Psoas muscle (tissue), 8 donors: ENCODE measurements at regions of chr6 and their contacts with region 1.

Region 1: DNA sequence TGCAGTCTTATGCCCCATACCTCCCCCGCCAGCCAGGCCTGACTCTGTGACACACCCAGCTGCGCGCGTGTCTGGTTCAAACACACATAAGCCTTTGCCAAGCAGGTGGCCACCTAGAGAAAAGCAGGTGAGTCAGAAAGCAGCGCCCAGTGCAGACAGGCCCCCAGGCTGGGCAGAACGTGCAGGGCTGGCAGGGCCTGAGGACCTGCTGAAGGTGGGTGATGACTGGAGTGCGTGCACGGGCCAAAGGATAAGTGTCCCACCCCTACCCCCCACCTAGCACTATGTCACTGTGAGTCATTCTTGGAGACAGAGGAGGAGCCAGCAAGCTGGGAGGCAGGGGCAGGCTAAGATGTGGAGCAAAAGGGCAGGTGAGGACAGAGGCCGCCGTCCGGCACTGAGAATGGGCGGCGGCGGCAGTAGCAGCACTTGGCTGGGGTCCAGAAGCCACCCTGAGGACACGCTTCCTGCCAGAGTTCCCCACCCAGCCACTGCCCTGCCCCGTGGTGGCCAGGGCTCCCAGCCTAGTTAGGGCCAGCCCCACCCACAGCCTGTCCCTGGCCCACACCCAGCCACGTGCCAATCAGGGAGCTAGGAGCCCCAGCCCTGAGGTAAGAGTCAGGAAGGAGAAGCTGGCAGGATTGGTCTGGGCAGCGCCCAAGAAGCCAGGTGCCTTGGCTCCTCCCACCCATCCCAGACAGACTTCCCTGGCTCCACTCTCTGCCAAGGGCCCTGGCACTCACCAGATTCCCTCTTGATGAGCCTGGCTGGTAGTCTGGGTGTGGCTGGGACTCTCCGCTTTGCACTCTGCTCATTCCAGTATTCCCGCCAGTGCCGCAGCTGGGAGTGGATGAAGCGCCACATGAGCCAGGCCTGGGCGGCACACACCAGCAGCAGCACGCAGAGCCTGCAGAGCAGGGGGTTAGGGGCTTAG is 72.7 kb downstream of the TRAM2 start:
- DNase-seq: peak; percentile 92 to 97
- ATAC-seq: peak; percentile 88 to 93 (median 91)
- H3K4me3 ChIP-seq: no peak overlapping the region
- H3K27ac ChIP-seq: peak overlapping the region; percentile 81
- H3K4me1 ChIP-seq: peaks cover 49% of the 10 kb centered on the region
- H3K27me3 ChIP-seq: no peaks in the 10 kb centered on the region
- CTCF ChIP-seq: no peak

Region 2: DNA sequence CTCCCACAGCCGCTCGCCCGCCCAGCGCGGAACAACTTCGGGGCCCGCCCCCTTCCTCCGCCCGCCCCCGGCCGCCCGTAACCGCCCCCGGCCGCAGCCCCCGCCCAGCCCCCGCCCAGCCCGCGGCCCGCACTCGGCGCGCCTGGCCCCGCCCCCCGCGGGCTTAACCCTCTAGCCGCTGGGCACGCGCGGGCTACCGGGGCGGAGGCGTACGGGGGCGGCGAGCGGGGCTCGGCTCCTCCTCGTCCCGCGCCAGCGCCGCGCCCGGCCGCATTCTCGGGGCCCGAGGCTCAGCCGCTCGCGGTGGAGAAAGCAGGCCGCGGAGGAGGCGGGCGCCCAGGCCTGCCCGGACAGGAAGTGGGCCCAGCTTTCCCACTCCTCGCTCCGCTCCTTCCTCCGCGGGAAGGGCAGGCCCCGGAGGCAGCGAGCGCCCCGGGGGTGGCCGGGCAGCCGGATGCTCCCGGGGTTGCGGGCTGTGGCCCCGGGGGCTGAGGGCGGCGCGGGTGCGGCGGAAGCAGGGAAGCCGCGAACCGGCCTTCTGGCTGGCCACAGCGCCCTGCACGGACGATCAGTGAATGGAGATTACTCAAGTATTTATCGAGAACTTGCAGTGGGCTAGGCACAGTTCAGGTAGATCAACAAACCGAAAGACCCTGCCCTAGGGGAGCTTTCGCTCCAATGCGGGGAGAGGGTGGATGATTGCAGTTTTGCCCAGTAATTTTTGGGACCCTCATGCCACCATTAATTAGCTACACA is 73.1 kb after region 1 on chr6 and contains the start of gene TRAM2:
- intact Hi-C with region 1: loop called in 1 of 2 experiments (anchors 5 kb)
- DNase-seq: peak; percentile 92
- ATAC-seq: peak; percentile 92 to 95 (median 94)
- H3K4me3 ChIP-seq: peak within 1 kb of the TSS; percentile 98
- H3K27ac ChIP-seq: peak within 1 kb of the TSS; percentile 98
- H3K4me1 ChIP-seq: peaks cover 19% of the 10 kb centered on the region
- H3K27me3 ChIP-seq: no peaks in the 10 kb centered on the region
- CTCF ChIP-seq: peak; percentile 26
- total RNA-seq, gene TRAM2: 3.4 to 5.7 (median 4.5) TPM

Region 3: DNA sequence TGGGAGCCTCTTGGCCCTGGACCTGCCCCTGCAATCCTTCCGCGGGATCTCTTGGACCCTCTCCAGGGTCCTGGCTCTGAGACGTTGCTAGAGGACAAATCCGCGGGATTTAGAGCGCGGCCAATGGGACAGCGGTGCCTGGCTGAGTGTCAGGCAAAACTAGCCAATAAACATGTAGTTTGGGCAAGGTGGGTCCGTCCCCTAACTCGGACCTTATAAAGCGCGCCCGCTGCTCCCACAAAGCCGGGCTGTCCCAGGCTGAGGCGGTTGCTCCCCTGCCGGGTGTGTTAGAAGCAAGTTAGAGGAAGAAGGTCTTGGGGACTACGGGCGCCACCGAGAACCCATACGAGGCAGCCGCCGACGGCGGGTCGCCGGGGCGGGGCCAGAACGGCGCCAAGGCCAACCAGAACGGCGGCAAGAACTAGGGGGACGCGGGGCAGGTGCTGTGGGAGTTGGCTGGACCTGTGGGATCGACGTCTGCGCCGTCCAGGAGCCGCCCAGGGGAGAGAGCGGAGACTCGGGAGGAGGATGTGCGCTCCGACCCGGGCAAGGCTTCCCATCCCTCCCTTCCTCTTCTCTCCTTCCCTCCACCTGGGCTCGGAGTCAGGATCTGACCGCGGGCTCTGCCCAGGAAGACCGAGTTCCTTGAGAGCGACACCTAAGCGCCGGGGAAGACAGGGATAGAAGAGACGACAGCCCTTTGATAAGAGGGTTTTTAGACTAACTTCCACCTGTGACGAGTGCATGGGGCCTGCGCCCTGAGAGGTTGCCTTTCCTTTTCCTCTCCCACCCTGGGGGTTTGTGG is 160.3 kb after region 1 on chr6:
- intact Hi-C with region 1: loop called (anchors 5 kb)
- DNase-seq: peak; percentile 79 to 87
- ATAC-seq: peak; percentile 89 to 99 (median 98)
- H3K4me3 ChIP-seq: peak overlapping the region; percentile 84
- H3K27ac ChIP-seq: peak overlapping the region; percentile 53
- H3K4me1 ChIP-seq: no peaks in the 10 kb centered on the region
- H3K27me3 ChIP-seq: peaks cover 0 to 5% (median 0%) of the 10 kb centered on the region in 3 donors
- CTCF ChIP-seq: no peak